Activated naive CD4-positive, alpha-beta T cell treated with anti-CD3 and anti-CD28 coated beads for 36 hours (primary cell): ENCODE measurements at regions of chr19 and their contacts with region 1.

Region 1: GRCh38 chr19:36225219-36225892 is 10.4 kb downstream of the ZNF146 start:
- DNase-seq: no peak
- H3K4me3 Mint-ChIP-seq: no peak overlapping the region
- H3K27ac Mint-ChIP-seq: peak overlapping the region; percentile 77
- H3K4me1 Mint-ChIP-seq: peaks cover 24% of the 10 kb centered on the region
- H3K27me3 Mint-ChIP-seq: no peaks in the 10 kb centered on the region

Region 2: GRCh38 chr19:37770985-37771384 is 1545.6 kb after region 1 on chr19:
- CTCF ChIA-PET with region 1: no interaction called
- intact Hi-C with region 1: loop called (anchors 5 kb)
- DNase-seq: no peak
- H3K4me3 Mint-ChIP-seq: no peak overlapping the region
- H3K27ac Mint-ChIP-seq: no peak overlapping the region
- H3K4me1 Mint-ChIP-seq: peaks cover 9% of the 10 kb centered on the region
- H3K27me3 Mint-ChIP-seq: no peaks in the 10 kb centered on the region